ENCODE measurements at regions of chr17 and their contacts with region 1.

Region 1: GRCh38 chr17:45148183-45149036 is at the start of gene HEXIM1:
- DNase-seq: peak; percentile 99
- H3K4me3 Mint-ChIP-seq: peak within 1 kb of the TSS; percentile 99
- H3K27ac Mint-ChIP-seq: peak within 1 kb of the TSS; percentile 100
- H3K4me1 Mint-ChIP-seq: peaks cover 42% of the 10 kb centered on the region
- H3K27me3 Mint-ChIP-seq: no peaks in the 10 kb centered on the region
- total RNA-seq, gene HEXIM1: 24.9 to 25.4 TPM

Region 2: GRCh38 chr17:44199553-44200477 is 948.6 kb before region 1 on chr17 and contains the start of gene ATXN7L3:
- CTCF ChIA-PET with region 1: no interaction called
- POLR2A ChIA-PET with region 1: no interaction called
- intact Hi-C with region 1: loop called (anchors 10 kb)
- DNase-seq: peak; percentile 100
- H3K4me3 Mint-ChIP-seq: peak within 1 kb of the TSS; percentile 91
- H3K27ac Mint-ChIP-seq: peak within 1 kb of the TSS; percentile 92
- H3K4me1 Mint-ChIP-seq: peaks cover 41% of the 10 kb centered on the region
- H3K27me3 Mint-ChIP-seq: no peaks in the 10 kb centered on the region
- total RNA-seq, gene ATXN7L3: 63.4 to 69.7 TPM

Region 3: DNA sequence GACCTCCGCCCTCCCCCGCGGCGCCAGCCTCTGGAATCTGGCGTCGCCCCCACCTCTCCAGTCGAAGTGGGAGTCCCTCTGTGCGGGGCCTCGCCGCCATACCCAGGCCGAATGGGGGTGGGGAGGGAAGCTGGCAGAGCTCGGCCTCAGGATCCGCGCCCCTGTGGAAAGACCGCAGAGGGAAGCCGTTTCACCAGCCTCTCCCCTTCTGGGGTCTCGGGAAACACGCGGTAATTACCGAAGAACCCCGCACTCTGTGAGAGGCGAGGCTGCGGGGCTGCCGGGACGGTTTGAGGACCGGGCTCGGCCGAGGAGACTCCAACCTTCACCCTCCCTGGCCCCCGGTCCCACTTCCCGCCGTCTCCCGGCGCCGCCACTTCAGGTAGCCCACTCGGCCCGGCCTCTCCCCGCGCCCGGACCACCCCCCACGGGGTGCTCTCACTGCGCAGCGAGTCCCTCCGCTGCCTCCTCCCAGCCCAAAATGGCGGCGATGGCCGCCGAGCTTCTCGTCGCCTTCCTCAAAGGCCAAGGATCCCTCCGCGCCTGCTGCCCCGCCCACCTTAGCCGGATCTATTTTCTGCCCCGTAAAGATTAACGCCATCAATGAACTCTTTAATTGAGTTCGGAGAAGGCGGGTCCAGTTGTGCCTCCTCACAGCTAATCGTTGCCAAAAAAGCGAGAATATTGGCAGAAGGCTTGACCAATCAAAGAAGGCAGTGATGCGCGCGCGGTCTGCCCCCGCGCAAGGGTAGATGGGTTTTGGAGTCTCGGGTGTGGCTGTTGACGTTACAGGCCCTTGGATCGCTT is 12.8 kb after region 1 on chr17:
- CTCF ChIA-PET with region 1: interaction called, 170 read pairs
- POLR2A ChIA-PET with region 1: interaction called, 217 read pairs
- intact Hi-C with region 1: loop called (anchors 1 kb)
- DNase-seq: peak; percentile 99
- H3K4me3 Mint-ChIP-seq: peak overlapping the region; percentile 99
- H3K27ac Mint-ChIP-seq: peak overlapping the region; percentile 99
- H3K4me1 Mint-ChIP-seq: peaks cover 38% of the 10 kb centered on the region
- H3K27me3 Mint-ChIP-seq: peaks cover 2% of the 10 kb centered on the region

Region 4: DNA sequence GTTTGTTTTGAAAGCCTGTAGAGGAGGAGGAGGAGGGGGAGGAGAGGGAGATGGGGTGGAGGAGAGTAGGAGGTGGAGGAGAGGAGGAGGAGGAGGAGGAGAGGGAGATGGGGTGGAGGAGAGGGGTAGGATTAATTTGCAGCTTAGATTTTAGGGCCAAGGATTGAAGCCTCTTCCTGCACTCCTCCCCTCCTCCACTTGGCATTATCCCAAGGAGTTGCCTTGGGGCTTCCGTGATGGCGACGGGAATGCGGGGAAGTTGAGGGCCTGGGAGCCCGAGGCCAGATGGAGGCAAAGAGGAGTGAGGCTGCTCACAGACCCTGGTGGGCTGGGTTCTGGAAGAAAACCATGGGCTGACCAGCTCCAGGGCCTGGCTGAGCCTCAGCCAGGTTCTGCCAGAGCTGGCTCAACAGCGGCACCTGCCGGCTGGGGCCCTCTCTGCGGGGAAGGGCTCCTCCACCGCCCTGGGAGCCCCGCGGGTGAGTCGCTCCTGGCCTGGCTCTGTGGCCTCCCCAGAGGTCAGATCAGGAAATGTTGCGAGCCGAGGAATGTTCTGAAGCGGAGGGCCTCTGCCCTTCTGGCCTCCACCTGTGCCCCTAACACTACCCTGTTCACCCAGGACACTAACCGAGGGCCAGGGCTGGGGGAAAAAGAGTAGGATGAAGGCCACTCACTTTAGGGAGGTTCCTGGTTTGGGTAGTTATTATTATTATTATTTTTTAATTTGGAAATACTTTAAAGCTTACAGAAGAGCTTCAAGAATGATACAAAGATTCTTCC is 49.3 kb after region 1 on chr17:
- CTCF ChIA-PET with region 1: interaction called, 105 read pairs
- POLR2A ChIA-PET with region 1: interaction called, 4 read pairs
- intact Hi-C with region 1: no loop called
- DNase-seq: peak; percentile 93
- H3K4me3 Mint-ChIP-seq: no peak overlapping the region
- H3K27ac Mint-ChIP-seq: no peak overlapping the region
- H3K4me1 Mint-ChIP-seq: peaks cover 4% of the 10 kb centered on the region
- H3K27me3 Mint-ChIP-seq: no peaks in the 10 kb centered on the region

Region 5: GRCh38 chr17:45247429-45248131 is 99.2 kb after region 1 on chr17:
- CTCF ChIA-PET with region 1: interaction called, 7 read pairs
- POLR2A ChIA-PET with region 1: interaction called, 8 read pairs
- intact Hi-C with region 1: loop called (anchors 1 kb)
- DNase-seq: peak; percentile 99
- H3K4me3 Mint-ChIP-seq: peak overlapping the region; percentile 86
- H3K27ac Mint-ChIP-seq: peak overlapping the region; percentile 94
- H3K4me1 Mint-ChIP-seq: peaks cover 59% of the 10 kb centered on the region
- H3K27me3 Mint-ChIP-seq: no peaks in the 10 kb centered on the region

Region 6: GRCh38 chr17:45317112-45317928 is 168.9 kb after region 1 on chr17:
- CTCF ChIA-PET with region 1: interaction called, 3 read pairs
- POLR2A ChIA-PET with region 1: interaction called, 24 read pairs
- intact Hi-C with region 1: loop called (anchors 1 kb)
- DNase-seq: peak; percentile 100
- H3K4me3 Mint-ChIP-seq: peak overlapping the region; percentile 81
- H3K27ac Mint-ChIP-seq: peak overlapping the region; percentile 89
- H3K4me1 Mint-ChIP-seq: peaks cover 65% of the 10 kb centered on the region
- H3K27me3 Mint-ChIP-seq: no peaks in the 10 kb centered on the region

Measured in activated CD4-positive, alpha-beta memory T cell treated with anti-CD3 and anti-CD28 coated beads for 36 hours (primary cell).